ENCODE measurements at regions of chr6 and their contacts with region 1.

Region 1: DNA sequence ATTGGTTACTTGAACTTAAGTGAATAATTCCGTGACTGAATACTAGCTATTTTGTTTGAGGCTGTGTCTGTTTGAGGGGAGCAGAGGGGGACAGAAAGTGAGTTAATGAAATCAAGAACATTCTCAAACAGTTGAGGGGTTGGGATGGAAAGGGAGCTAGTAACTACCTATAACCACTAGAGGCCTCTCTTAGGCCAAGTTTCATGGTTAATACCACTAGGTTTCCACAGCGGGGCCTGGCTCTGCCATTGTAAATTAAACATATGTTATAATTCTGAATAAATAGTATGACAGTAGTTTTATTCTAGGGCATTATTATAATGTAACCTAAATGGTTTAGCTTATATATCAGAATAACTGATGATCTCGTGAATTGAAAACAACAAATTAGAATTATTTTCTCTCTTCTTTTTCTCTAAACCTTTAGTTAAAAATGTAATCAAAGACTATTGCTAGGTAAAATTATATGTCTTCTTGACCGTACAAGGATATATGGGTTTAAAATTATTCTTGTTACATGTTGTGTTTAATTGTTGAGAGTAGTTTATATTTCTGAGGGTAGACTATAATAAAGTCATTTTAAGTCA is 108.1 kb downstream of the BCKDHB start:
- DNase-seq: peak; percentile 22
- ATAC-seq: peak; percentile 95
- H3K4me3 ChIP-seq: no peak overlapping the region
- H3K27ac ChIP-seq: no peak overlapping the region
- H3K4me1 ChIP-seq: no peaks in the 10 kb centered on the region
- H3K27me3 ChIP-seq: no peaks in the 10 kb centered on the region
- CTCF ChIP-seq: peak; percentile 39 to 76 (median 75); a peak in 4 of 6 replicates
- POLR2A ChIP-seq: no peak
- RAD21 ChIP-seq: peak; percentile 72

Region 2: GRCh38 chr6:80457439-80457933 is 243.0 kb after region 1 on chr6:
- CTCF ChIA-PET with region 1: interaction called, 15 read pairs
- POLR2A ChIA-PET with region 1: no interaction called
- RAD21 ChIA-PET with region 1: interaction called in 1 of 2 experiments, 3 read pairs
- intact Hi-C with region 1: no loop called
- DNase-seq: peak; percentile 38
- ATAC-seq: peak; percentile 86
- H3K4me3 ChIP-seq: no peak overlapping the region
- H3K27ac ChIP-seq: no peak overlapping the region
- H3K4me1 ChIP-seq: peaks cover 0 to 31% of the 10 kb centered on the region in 2 experiments; a peak in 2 of 4 replicates
- H3K27me3 ChIP-seq: no peaks in the 10 kb centered on the region
- CTCF ChIP-seq: peak; percentile 14 to 52 (median 48); a peak in 4 of 6 replicates
- POLR2A ChIP-seq: no peak
- RAD21 ChIP-seq: no peak

Region 3: DNA sequence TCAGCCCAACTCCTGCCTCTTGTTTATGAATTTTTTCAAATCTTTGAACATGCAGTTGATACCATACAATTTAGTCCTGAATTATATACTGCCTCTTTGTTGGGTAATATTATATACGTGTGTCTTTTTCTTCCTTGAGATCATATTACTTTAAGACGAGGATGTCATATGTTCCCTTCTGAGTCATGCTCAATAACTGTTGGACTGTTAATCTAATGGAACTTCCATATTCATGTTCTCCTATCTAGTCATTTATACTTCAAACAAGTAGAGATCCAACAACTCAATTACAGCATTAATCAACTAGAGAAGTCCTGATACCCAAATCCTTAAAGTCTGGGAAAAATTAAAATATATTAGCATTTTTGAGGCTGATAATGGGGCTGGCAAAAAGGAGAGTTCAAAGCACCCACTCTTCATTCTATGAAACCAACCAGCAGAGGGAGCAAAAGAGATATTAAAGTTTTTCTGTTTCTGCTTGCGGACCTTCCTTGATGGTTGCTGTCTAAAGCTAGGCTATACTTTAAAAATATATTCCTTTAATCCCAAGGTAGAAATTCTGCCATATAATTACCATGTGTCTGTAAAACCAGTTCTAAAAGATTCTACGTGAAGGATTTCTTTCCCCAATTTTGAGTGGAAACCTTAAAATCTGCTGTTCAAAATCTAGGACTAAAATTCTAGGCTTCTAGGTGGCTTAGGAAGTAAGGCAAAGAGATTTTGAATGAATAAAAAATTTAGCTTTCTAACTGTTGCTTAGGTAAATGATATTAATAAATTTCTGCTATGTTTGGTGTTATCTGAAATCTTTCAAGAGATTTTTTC is 390.8 kb after region 1 on chr6:
- CTCF ChIA-PET with region 1: interaction called, 8 read pairs
- POLR2A ChIA-PET with region 1: no interaction called
- RAD21 ChIA-PET with region 1: no interaction called
- intact Hi-C with region 1: loop called (anchors 10 kb)
- DNase-seq: peak; percentile 42
- ATAC-seq: peak; percentile 89
- H3K4me3 ChIP-seq: no peak overlapping the region
- H3K27ac ChIP-seq: no peak overlapping the region
- H3K4me1 ChIP-seq: peaks cover 0 to 20% of the 10 kb centered on the region in 2 experiments; a peak in 2 of 4 replicates
- H3K27me3 ChIP-seq: no peaks in the 10 kb centered on the region
- CTCF ChIP-seq: peak; percentile 55 to 74 (median 55); a peak in 5 of 6 replicates
- POLR2A ChIP-seq: no peak
- RAD21 ChIP-seq: peak; percentile 79

Region 4: DNA sequence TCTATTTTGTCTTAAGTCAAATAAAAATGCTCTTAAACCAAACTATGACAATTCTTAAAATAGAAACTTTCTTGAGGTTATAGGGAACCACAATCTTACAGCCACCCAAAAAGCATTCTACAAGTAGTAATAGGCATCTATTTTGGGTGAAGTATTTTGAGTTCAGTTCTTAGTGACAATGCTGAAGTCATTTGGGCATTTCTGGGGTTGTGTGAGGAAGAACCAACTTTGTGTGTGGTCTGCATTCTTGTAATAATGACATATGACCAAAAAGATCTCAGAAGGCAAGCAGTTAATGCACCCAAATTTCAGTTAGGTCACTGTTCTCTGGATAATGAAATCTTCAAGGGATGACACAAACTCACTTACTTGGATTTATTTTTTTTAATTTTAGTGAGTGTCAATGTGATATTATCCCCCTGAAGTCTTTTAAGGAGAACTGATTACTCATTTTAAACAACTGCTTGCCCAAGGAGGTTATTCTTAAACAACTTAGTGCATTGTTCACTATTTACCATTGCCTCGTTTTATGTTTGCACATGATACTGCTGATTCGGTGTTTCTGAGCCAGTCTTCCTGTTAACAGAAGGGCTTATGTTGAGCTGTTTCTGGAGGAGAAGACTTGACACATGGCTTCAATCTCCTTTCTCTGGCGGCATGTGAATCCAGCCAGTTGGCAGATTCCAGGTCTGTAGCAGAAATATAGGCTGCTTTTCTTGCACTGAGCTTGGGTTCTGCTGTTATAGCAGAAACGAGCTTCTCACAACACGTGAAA is 510.8 kb after region 1 on chr6:
- CTCF ChIA-PET with region 1: no interaction called
- POLR2A ChIA-PET with region 1: no interaction called
- RAD21 ChIA-PET with region 1: no interaction called
- intact Hi-C with region 1: loop called (anchors 10 kb)
- DNase-seq: no peak
- ATAC-seq: no peak
- H3K4me3 ChIP-seq: no peak overlapping the region
- H3K27ac ChIP-seq: no peak overlapping the region
- H3K4me1 ChIP-seq: no peaks in the 10 kb centered on the region
- H3K27me3 ChIP-seq: no peaks in the 10 kb centered on the region
- CTCF ChIP-seq: no peak
- POLR2A ChIP-seq: no peak
- RAD21 ChIP-seq: no peak

Region 5: DNA sequence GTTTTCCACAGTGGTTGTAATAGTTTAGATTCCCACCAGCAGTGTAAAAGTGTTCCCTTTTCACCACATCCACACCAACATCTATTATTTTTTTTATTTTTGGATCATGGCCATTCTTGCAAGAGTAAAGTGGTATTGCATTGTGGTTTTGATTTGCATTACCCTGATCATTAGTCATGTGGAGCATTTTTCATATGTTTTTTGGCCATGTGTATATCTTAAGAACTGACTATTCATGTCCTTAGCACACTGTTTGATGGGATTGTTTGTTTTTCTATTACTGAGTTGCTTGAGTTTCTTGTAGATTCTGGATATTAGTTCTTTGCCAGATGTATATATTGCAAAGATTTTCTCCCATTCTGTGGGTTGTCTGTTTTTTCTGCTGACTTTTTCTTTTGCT is 717.8 kb after region 1 on chr6:
- CTCF ChIA-PET with region 1: interaction called, 3 read pairs
- POLR2A ChIA-PET with region 1: no interaction called
- RAD21 ChIA-PET with region 1: no interaction called
- intact Hi-C with region 1: loop called (anchors 10 kb)
- DNase-seq: no peak
- ATAC-seq: no peak
- H3K4me3 ChIP-seq: no peak overlapping the region
- H3K27ac ChIP-seq: no peak overlapping the region
- H3K4me1 ChIP-seq: no peaks in the 10 kb centered on the region
- H3K27me3 ChIP-seq: no peaks in the 10 kb centered on the region
- CTCF ChIP-seq: no peak
- POLR2A ChIP-seq: no peak
- RAD21 ChIP-seq: no peak

Region 6: GRCh38 chr6:81465859-81466258 is 1251.3 kb after region 1 on chr6:
- CTCF ChIA-PET with region 1: no interaction called
- POLR2A ChIA-PET with region 1: no interaction called
- RAD21 ChIA-PET with region 1: no interaction called
- intact Hi-C with region 1: loop called (anchors 5 kb)
- DNase-seq: peak; percentile 37
- ATAC-seq: peak; percentile 50
- H3K4me3 ChIP-seq: no peak overlapping the region
- H3K27ac ChIP-seq: no peak overlapping the region
- H3K4me1 ChIP-seq: no peaks in the 10 kb centered on the region
- H3K27me3 ChIP-seq: no peaks in the 10 kb centered on the region
- CTCF ChIP-seq: peak; percentile 60 to 72 (median 68); a peak in 5 of 6 replicates
- POLR2A ChIP-seq: no peak
- RAD21 ChIP-seq: peak; percentile 66

Region 7: GRCh38 chr6:81981812-81982211 is 1767.3 kb after region 1 on chr6:
- CTCF ChIA-PET with region 1: no interaction called
- POLR2A ChIA-PET with region 1: no interaction called
- RAD21 ChIA-PET with region 1: no interaction called
- intact Hi-C with region 1: loop called (anchors 10 kb)
- DNase-seq: peak; percentile 43
- ATAC-seq: peak; percentile 87
- H3K4me3 ChIP-seq: peak overlapping the region in 1 of 2 experiments; percentile 15; a peak in 2 of 4 replicates
- H3K27ac ChIP-seq: no peak overlapping the region
- H3K4me1 ChIP-seq: peaks cover 0 to 15% of the 10 kb centered on the region in 2 experiments; a peak in 2 of 4 replicates
- H3K27me3 ChIP-seq: no peaks in the 10 kb centered on the region
- CTCF ChIP-seq: no peak
- POLR2A ChIP-seq: no peak
- RAD21 ChIP-seq: no peak; the same call in 1 of the 2 replicates